ENCODE measurements at regions of chr4 and their contacts with region 1.

Region 1: DNA sequence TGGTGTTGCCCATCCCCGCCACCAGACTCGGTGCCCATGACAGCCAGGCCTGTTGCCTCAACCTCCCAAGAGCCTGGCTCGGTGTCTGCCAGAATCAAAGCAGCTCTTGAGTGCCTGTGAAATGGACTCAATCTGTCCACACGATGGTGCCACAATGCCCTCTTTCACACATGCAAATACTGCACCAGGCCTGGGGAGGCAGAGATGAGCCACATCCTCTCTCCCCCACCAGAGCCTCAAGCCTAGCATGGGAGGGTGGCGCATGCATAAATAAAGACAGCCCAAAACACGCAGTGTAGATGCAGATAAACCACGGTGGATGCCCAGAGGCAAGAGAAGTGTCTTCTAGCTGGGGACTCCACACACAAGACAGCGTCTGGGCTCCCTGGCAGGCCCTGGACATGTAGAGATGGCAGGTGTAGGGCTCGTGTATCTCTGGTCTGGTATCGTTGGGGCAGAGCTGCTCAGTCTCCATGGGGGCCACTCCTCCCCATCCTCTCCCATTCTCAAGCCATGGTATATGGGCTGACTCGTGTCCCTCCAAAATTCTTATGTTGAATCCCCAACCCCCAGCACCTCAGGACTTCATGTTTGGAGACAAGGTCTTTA is 65.6 kb downstream of the JAKMIP1 start:
- DNase-seq: peak; percentile 73
- H3K4me3 Mint-ChIP-seq: no peak overlapping the region
- H3K27ac Mint-ChIP-seq: no peak overlapping the region
- H3K4me1 Mint-ChIP-seq: peaks cover 8% of the 10 kb centered on the region
- H3K27me3 Mint-ChIP-seq: no peaks in the 10 kb centered on the region

Region 2: DNA sequence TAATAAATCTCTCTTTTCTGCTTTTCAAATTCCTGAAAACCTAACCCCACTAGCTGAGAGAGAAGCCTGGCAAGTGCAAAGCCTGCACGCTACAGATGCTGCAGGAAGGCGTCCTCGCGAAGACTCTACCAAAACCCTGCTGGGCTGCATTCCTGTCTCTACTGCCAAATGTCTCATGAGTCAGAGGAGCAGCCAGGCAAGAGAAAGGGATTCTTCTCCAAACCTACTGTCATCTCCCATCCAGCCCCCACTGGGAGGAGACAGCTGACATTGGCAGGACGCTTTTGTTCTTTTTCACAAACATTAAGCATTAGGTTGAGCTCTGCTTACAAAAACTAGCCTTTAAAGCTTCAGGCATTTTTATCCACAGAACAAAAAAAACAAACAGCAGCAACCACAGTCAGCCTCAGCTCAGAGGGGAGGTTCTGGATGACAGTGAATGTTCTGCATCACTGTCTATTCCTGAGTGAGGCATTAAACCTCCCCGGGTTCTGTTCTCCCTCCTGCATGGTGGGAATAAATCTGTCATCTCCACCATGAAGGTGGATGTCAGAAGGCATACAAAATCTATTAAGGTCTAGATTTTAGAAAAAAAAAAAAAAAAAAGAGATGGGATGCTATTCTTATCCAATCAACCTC is 259.8 kb before region 1 on chr4:
- CTCF ChIA-PET with region 1: no interaction called
- POLR2A ChIA-PET with region 1: no interaction called
- intact Hi-C with region 1: no loop called
- DNase-seq: no peak
- H3K4me3 Mint-ChIP-seq: no peak overlapping the region
- H3K27ac Mint-ChIP-seq: no peak overlapping the region
- H3K4me1 Mint-ChIP-seq: no peaks in the 10 kb centered on the region
- H3K27me3 Mint-ChIP-seq: peaks cover 11% of the 10 kb centered on the region

Region 3: DNA sequence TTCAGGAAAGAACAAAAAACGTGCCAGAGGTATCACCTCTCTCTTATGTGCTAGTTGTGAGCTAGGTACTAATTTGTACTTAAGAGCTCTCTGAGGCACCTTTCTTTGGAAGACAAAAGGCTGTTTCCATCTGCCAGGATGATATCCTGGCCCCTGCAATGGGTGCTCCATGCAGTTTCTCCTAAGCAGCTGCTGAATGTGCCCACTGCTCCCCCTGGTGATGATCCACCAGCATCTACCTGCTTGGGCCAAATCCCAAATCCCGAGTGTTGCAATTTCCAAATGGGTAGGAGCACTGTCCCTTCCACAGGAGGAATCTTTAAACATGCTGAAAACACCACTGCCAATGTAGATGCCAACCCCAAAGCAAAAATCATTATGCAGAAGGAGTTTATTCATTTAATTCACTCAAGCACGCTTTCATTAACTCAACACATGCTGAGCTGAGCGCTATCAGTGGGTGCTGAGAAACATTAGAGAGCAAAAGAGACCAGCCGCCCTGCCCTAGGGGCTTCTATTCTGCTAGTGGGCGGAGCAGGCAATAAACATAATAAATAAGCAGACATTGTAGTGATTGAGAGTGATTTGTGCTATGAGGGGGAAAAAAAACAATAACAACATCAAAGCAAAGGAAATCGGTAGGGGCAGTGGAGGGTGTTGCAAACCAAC is 46.9 kb before region 1 on chr4:
- CTCF ChIA-PET with region 1: no interaction called
- POLR2A ChIA-PET with region 1: no interaction called
- intact Hi-C with region 1: no loop called
- DNase-seq: no peak
- H3K4me3 Mint-ChIP-seq: no peak overlapping the region
- H3K27ac Mint-ChIP-seq: no peak overlapping the region
- H3K4me1 Mint-ChIP-seq: peaks cover 5% of the 10 kb centered on the region
- H3K27me3 Mint-ChIP-seq: no peaks in the 10 kb centered on the region

Region 4: GRCh38 chr4:6200011-6200921 is 65.5 kb after region 1 on chr4 and contains the start of gene JAKMIP1:
- CTCF ChIA-PET with region 1: interaction called, 13 read pairs
- POLR2A ChIA-PET with region 1: interaction called, 4 read pairs
- intact Hi-C with region 1: loop called (anchors 1 kb)
- DNase-seq: peak; percentile 93
- H3K4me3 Mint-ChIP-seq: peak within 1 kb of the TSS; percentile 80
- H3K27ac Mint-ChIP-seq: peak within 1 kb of the TSS; percentile 74
- H3K4me1 Mint-ChIP-seq: peaks cover 35% of the 10 kb centered on the region
- H3K27me3 Mint-ChIP-seq: peaks cover 15% of the 10 kb centered on the region
- total RNA-seq, gene JAKMIP1: 17.7 to 18.1 TPM

Region 5: GRCh38 chr4:6206771-6207290 is 72.1 kb after region 1 on chr4:
- CTCF ChIA-PET with region 1: interaction called, 11 read pairs
- POLR2A ChIA-PET with region 1: no interaction called
- intact Hi-C with region 1: no loop called
- DNase-seq: no peak
- H3K4me3 Mint-ChIP-seq: no peak overlapping the region
- H3K27ac Mint-ChIP-seq: no peak overlapping the region
- H3K4me1 Mint-ChIP-seq: no peaks in the 10 kb centered on the region
- H3K27me3 Mint-ChIP-seq: peaks cover 5% of the 10 kb centered on the region